ENCODE measurements at regions of chr16 and their contacts with region 1.

Region 1: DNA sequence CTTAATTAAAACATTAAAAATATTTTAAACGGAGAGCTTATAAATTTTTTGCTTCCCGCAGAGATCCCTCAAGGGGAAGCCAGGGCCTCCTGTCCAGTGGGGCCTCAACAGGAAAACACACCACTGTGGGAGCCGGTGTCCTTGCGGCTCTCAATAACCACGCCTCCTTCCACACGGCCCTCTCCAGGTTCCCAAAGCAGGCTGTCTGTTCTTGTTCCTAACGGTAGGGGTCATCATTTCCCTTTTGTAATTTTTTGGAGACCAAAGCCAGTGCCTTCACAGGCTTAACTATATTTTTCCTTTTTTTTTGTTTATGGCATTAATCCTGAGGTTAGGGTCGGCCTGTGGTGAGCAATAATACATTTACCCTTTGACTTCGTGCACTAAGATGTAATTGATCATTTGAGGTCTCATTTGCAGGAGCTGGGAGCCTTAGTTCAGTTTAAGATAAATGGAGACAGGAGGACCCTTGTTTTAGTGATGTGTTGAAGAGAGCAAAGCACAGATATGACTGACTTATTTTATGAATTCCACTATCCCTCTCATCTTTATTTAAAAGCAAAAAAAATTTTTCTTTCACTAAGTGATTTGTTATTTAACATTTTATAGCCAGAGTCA is 77.5 kb upstream of the N4BP1 start:
- DNase-seq: no peak

Region 2: GRCh38 chr16:49350265-49351095 is 663.0 kb after region 1 on chr16:
- intact Hi-C with region 1: loop called (anchors 10 kb)
- DNase-seq: peak; percentile 91

Measured in posterior vena cava (tissue), 2 donors.